ENCODE measurements at regions of chr17 and their contacts with region 1.

Region 1: GRCh38 chr17:55356434-55357328 is 65.0 kb downstream of the MMD start:
- DNase-seq: peak in 8 of 9 donors; percentile 18 to 62 (median 48)
- ATAC-seq: peak; percentile 87
- H3K4me3 ChIP-seq: no peak overlapping the region
- H3K4me3 Mint-ChIP-seq: no peak overlapping the region
- H3K27ac ChIP-seq: no peak overlapping the region
- H3K27ac Mint-ChIP-seq: no peak overlapping the region
- H3K4me1 ChIP-seq: no peaks in the 10 kb centered on the region
- H3K4me1 Mint-ChIP-seq: peaks cover 0 to 11% (median 2%) of the 10 kb centered on the region in 7 donors
- H3K27me3 ChIP-seq: no peaks in the 10 kb centered on the region
- H3K27me3 Mint-ChIP-seq: peaks cover 14 to 41% (median 15%) of the 10 kb centered on the region in 5 donors

Region 2: DNA sequence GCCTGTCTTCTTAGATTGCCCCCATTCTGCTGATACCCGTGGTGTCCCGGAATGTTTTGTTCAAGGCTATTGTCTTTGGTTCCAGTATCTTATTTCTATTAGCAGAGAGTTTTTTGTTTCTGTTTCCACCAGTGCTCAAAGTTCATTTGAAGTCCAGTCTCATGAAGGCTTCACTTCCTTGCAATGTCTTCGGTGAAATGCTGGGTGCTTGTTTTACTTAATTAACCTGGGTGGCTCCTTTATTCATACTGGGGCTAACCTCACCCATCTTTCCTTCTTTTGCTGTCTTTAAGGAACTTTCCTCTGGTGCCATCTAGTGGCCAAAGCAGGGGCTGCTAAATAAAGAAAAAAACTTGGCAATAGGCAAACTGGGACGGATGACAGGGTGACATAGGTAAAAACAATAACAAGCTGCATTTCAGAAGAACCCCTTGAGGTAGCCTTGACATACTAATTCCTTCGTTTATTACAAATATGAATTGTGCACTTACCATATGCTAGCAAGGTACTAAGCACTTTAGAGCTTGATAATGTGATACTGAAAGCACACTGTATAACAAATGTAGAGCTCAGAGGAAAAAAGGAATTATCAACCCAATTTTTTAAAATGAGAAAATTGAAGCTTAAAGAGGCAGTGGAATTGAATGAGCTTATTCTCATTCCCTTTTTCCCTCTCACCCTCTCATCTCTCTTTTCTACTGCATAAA is 157.4 kb after region 1 on chr17:
- CTCF ChIA-PET with region 1: interaction called, 4 read pairs
- POLR2A ChIA-PET with region 1: no interaction called
- intact Hi-C with region 1: loop called (anchors 1 kb)
- DNase-seq: peak; percentile 40 to 73 (median 59)
- ATAC-seq: peak; percentile 78
- H3K4me3 ChIP-seq: no peak overlapping the region
- H3K4me3 Mint-ChIP-seq: no peak overlapping the region
- H3K27ac ChIP-seq: no peak overlapping the region
- H3K27ac Mint-ChIP-seq: no peak overlapping the region
- H3K4me1 ChIP-seq: no peaks in the 10 kb centered on the region
- H3K4me1 Mint-ChIP-seq: peaks cover 0 to 6% (median 0%) of the 10 kb centered on the region in 7 donors
- H3K27me3 ChIP-seq: no peaks in the 10 kb centered on the region
- H3K27me3 Mint-ChIP-seq: peaks cover 0 to 11% (median 8%) of the 10 kb centered on the region in 5 donors

Measured in naive thymus-derived CD4-positive, alpha-beta T cell (primary cell).